ENCODE measurements at regions of chr11 and their contacts with region 1.

Region 1: DNA sequence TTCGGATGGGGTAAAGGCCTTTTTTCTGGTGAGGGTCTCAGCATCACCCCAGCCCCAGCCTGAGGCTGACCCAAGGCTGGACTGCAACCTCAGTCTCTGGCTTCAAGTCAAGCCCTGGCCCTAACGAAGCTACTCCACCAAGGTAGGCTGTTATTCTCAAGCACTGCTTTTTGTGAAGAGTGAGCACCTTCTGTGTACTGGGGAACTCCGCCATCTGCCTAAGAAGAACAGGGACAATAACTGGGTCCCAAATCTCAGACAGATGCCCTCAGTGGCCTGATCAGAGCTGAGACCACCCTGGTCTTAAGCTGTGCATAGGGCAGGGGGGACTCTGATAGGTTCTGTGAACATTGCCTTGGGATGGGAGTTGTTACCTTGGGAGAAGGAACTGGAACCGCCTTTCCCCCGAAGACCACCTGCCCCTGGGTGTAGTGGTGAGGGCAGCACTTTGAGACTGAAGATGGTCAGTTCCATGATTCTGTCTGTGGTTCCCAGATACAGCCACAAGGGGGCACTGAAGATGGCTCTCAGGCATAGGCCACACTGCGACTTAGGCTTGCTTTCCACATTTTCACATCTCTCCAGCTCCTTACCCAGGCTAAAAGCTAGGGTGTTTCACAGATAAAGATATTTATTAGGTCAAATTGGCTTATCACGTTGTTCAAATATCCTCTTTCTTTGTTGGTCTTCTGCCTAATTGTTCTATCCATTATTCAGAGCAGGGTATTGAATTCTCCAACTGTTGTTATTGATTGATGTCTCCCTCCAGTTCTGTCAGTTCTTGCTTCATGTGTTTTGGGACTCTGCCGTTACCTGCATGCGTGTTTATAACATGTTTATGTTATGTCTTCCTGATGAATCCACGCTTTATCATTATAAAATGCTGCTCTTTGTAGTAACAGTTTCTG is 11.8 kb upstream of the UVRAG start:
- DNase-seq: peak; percentile 86

Region 2: DNA sequence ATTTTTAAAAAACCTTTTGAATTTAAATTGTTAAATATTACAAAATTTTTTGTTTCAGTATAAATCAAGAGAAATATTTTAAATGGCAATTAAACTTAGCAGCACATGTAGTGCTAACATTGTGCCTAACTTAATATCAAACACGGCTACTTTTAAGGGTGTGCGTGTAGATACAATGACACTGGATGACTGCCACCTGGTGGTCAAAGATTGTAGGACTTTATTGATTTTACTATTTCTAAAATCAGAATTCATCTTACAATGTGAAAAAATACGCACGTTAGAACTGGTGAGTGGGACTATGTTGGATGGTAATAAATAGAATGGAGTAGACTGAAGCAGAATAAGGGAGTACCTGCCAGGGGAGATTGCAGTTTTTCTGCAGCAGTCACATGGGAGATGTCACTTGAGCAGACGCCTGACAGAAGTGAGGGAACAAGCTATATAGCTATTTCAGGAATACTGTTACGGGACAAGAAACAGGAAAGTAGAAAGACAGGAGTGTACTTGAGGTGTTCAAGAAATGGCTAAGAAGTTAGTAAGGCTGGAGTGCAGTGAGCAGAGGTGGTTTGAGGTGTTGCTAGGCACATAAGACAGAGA is 64.7 kb after region 1 on chr11:
- intact Hi-C with region 1: loop called (anchors 1 to 5 kb)
- DNase-seq: no peak

Region 3: GRCh38 chr11:76318744-76319384 is 515.7 kb after region 1 on chr11:
- intact Hi-C with region 1: loop called (anchors 10 kb)
- DNase-seq: peak; percentile 92

Measured in posterior vena cava (tissue), 2 donors.